CD8-positive, alpha-beta memory T cell (primary cell): ENCODE measurements at regions of chr2 and their contacts with region 1.

Region 1: GRCh38 chr2:12716282-12717190 is at the start of gene TRIB2:
- DNase-seq: peak; percentile 86 to 95 (median 90)
- H3K4me3 ChIP-seq: peak within 1 kb of the TSS; percentile 80
- H3K4me3 Mint-ChIP-seq: peak within 1 kb of the TSS; percentile 93 to 100 (median 100)
- H3K27ac ChIP-seq: peak within 1 kb of the TSS; percentile 83
- H3K27ac Mint-ChIP-seq: peak within 1 kb of the TSS; percentile 87 to 100 (median 98)
- H3K4me1 ChIP-seq: peaks cover 36% of the 10 kb centered on the region
- H3K4me1 Mint-ChIP-seq: peaks cover 46 to 63% (median 48%) of the 10 kb centered on the region in 3 donors
- H3K27me3 ChIP-seq: no peaks in the 10 kb centered on the region
- H3K27me3 Mint-ChIP-seq: peaks cover 0 to 2% of the 10 kb centered on the region in 2 donors
- total RNA-seq, gene TRIB2: 9.4 to 9.6 TPM

Region 2: GRCh38 chr2:11829947-11830707 is 886.4 kb before region 1 on chr2:
- CTCF ChIA-PET with region 1: interaction called, 14 read pairs
- POLR2A ChIA-PET with region 1: interaction called, 3 read pairs
- DNase-seq: peak; percentile 2 to 57 (median 49)
- H3K4me3 ChIP-seq: peak overlapping the region; percentile 38
- H3K4me3 Mint-ChIP-seq: peak overlapping the region; percentile 59 to 86 (median 82)
- H3K27ac ChIP-seq: peak overlapping the region; percentile 26
- H3K27ac Mint-ChIP-seq: peak overlapping the region in 6 of 8 donors; percentile 53 to 86 (median 64)
- H3K4me1 ChIP-seq: peaks cover 22% of the 10 kb centered on the region
- H3K4me1 Mint-ChIP-seq: peaks cover 23 to 58% (median 48%) of the 10 kb centered on the region in 3 donors
- H3K27me3 ChIP-seq: no peaks in the 10 kb centered on the region
- H3K27me3 Mint-ChIP-seq: no peaks in the 10 kb centered on the region

Region 3: DNA sequence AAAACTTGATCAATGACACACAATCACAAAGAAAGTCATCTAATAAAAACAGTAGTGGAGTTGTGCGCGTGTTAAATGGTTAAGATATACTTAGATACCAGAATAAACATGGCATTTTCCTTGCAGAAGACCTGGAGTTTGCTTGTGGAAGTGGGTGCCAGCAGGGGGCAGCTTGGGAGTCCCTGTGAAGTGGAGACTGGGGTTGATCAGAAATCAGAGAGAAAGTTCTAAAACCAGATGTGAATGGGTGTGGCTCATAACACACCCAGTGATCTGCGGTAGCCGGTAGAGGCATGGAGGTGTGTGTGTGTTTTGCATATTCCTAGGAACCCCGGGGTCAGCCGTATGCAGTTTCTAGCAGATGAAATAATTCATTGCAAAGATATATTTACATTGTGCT is 299.9 kb before region 1 on chr2:
- CTCF ChIA-PET with region 1: interaction called, 76 read pairs
- POLR2A ChIA-PET with region 1: interaction called, 9 read pairs
- DNase-seq: peak; percentile 44 to 78 (median 53)
- H3K4me3 ChIP-seq: no peak overlapping the region
- H3K4me3 Mint-ChIP-seq: peak overlapping the region in 5 of 7 donors; percentile 0 to 53 (median 29)
- H3K27ac ChIP-seq: no peak overlapping the region
- H3K27ac Mint-ChIP-seq: peak overlapping the region in 5 of 8 donors; percentile 2 to 84 (median 35)
- H3K4me1 ChIP-seq: peaks cover 29% of the 10 kb centered on the region
- H3K4me1 Mint-ChIP-seq: peaks cover 35 to 62% (median 36%) of the 10 kb centered on the region in 3 donors
- H3K27me3 ChIP-seq: no peaks in the 10 kb centered on the region
- H3K27me3 Mint-ChIP-seq: peaks cover 0 to under 1% of the 10 kb centered on the region in 2 donors

Region 4: DNA sequence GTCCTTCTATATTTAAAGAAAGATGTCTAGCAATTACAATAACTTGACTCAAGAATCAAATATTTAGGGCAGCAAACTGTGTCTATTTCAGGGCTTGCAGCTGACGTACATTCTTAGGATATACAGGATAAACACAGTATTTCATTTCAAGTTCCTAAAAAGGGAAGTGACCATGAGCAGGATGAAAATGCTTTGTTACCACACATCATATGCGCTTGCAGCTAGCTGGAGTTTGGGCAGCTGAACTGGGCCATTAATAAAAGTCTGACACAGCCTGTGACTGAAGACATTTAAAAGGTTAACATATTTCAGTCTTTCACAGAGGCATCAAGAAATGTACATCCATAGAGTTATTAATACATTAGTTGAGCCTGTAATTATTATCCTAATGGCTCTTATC is 264.3 kb before region 1 on chr2:
- CTCF ChIA-PET with region 1: interaction called, 12 read pairs
- POLR2A ChIA-PET with region 1: interaction called, 8 read pairs
- DNase-seq: no peak
- H3K4me3 ChIP-seq: peak overlapping the region; percentile 3
- H3K4me3 Mint-ChIP-seq: peak overlapping the region; percentile 10 to 82 (median 74)
- H3K27ac ChIP-seq: peak overlapping the region; percentile 46
- H3K27ac Mint-ChIP-seq: peak overlapping the region in 7 of 8 donors; percentile 25 to 91 (median 66)
- H3K4me1 ChIP-seq: peaks cover 21% of the 10 kb centered on the region
- H3K4me1 Mint-ChIP-seq: peaks cover 35 to 52% (median 51%) of the 10 kb centered on the region in 3 donors
- H3K27me3 ChIP-seq: no peaks in the 10 kb centered on the region
- H3K27me3 Mint-ChIP-seq: no peaks in the 10 kb centered on the region

Region 5: GRCh38 chr2:12728221-12728777 is 11.8 kb after region 1 on chr2:
- CTCF ChIA-PET with region 1: interaction called, 45 read pairs
- POLR2A ChIA-PET with region 1: interaction called, 27 read pairs
- DNase-seq: peak; percentile 26 to 82 (median 77)
- H3K4me3 ChIP-seq: peak overlapping the region; percentile 35
- H3K4me3 Mint-ChIP-seq: peak overlapping the region; percentile 44 to 92 (median 73)
- H3K27ac ChIP-seq: peak overlapping the region; percentile 20
- H3K27ac Mint-ChIP-seq: peak overlapping the region; percentile 75 to 97 (median 90)
- H3K4me1 ChIP-seq: peaks cover 80% of the 10 kb centered on the region
- H3K4me1 Mint-ChIP-seq: peaks cover 88 to 99% (median 98%) of the 10 kb centered on the region in 3 donors
- H3K27me3 ChIP-seq: no peaks in the 10 kb centered on the region
- H3K27me3 Mint-ChIP-seq: no peaks in the 10 kb centered on the region

Region 6: GRCh38 chr2:12948961-12949353 is 232.4 kb after region 1 on chr2:
- CTCF ChIA-PET with region 1: interaction called, 3 read pairs
- POLR2A ChIA-PET with region 1: interaction called, 10 read pairs
- DNase-seq: no peak
- H3K4me3 ChIP-seq: no peak overlapping the region
- H3K4me3 Mint-ChIP-seq: peak overlapping the region in 4 of 7 donors; percentile 12 to 60 (median 16)
- H3K27ac ChIP-seq: no peak overlapping the region
- H3K27ac Mint-ChIP-seq: peak overlapping the region; percentile 18 to 91 (median 82)
- H3K4me1 ChIP-seq: peaks cover 10% of the 10 kb centered on the region
- H3K4me1 Mint-ChIP-seq: peaks cover 16 to 35% (median 23%) of the 10 kb centered on the region in 3 donors
- H3K27me3 ChIP-seq: no peaks in the 10 kb centered on the region
- H3K27me3 Mint-ChIP-seq: peaks cover 0 to 2% of the 10 kb centered on the region in 2 donors